Activated CD8-positive, alpha-beta T cell treated with anti-CD3 and anti-CD28 coated beads, Interleukin-2, amount 10 ng/mL, durations not matched to agents 7 days and 5 days (primary cell): ENCODE measurements at regions of chr1 and their contacts with region 1.

Region 1: GRCh38 chr1:92994105-92994712 is 32.9 kb upstream of the DIPK1A start:
- DNase-seq: peak; percentile 89
- ATAC-seq: peak; percentile 83
- H3K4me3 Mint-ChIP-seq: no peak overlapping the region
- H3K27ac Mint-ChIP-seq: peak overlapping the region; percentile 71
- H3K4me1 Mint-ChIP-seq: peaks cover 60% of the 10 kb centered on the region
- H3K27me3 Mint-ChIP-seq: no peaks in the 10 kb centered on the region

Region 2: DNA sequence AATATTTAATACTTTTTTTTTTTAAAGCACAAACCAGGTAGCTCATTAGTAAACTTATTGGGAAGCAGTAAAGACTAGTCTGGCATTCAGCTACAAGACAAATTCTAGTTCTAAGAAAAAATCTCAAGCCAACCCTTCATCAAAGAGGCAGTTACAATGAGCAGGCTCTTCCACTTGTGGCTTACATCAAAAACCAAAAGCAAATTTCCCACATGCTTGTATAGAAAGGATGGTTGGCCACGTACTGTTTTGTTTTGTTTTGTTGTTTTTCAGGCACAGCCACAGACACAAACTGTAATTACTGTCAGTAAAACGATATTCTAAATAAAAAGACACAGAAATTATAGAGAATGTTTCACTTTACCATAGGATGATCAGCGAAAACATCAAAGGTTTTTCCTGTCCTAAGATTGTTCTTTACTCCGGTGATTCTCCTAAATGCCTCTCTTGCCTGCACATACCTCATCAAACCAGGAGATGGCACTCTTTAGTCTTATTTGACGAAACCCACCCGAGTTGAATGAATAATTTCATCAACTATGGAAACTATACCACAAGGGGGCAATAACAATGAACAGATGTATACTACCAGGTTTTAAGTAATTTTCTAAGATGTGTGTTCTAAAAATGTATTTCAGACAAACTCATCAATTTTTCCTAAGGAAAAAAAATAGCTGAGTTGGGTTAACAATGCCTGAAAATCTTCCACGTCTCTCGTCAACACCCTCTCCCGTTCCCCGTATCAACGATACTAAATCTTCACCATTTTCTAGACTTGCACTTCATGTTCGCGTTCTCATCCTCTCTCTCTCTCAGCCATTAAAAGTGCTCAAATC is 135.4 kb before region 1 on chr1:
- CTCF ChIA-PET with region 1: interaction called, 142 read pairs
- POLR2A ChIA-PET with region 1: interaction called, 3 read pairs
- DNase-seq: peak; percentile 78
- ATAC-seq: peak; percentile 85
- H3K4me3 Mint-ChIP-seq: peak overlapping the region; percentile 11
- H3K27ac Mint-ChIP-seq: peak overlapping the region; percentile 62
- H3K4me1 Mint-ChIP-seq: peaks cover 25% of the 10 kb centered on the region
- H3K27me3 Mint-ChIP-seq: no peaks in the 10 kb centered on the region

Region 3: DNA sequence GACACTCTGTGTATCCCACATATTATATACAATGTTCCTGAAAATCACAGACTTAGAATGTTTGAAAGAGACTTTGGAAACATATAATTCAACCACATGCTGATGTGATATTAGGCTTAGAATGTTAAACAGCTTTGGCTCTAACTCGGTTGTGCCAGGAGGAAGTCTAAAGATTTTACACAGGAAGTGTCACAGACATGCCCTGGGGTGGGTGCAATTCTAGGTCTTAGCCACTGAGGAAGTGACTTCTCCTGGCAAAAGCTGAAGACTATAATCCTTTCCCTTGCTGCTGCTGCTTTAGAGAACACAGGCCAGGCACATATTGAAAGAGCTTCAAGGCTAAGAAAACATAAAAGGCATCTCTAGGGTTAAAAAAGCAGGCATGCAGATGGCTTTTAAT is 111.4 kb before region 1 on chr1:
- CTCF ChIA-PET with region 1: interaction called, 17 read pairs
- POLR2A ChIA-PET with region 1: no interaction called
- DNase-seq: peak; percentile 56
- ATAC-seq: peak; percentile 88
- H3K4me3 Mint-ChIP-seq: peak overlapping the region; percentile 3
- H3K27ac Mint-ChIP-seq: peak overlapping the region; percentile 56
- H3K4me1 Mint-ChIP-seq: peaks cover 32% of the 10 kb centered on the region
- H3K27me3 Mint-ChIP-seq: no peaks in the 10 kb centered on the region

Region 4: DNA sequence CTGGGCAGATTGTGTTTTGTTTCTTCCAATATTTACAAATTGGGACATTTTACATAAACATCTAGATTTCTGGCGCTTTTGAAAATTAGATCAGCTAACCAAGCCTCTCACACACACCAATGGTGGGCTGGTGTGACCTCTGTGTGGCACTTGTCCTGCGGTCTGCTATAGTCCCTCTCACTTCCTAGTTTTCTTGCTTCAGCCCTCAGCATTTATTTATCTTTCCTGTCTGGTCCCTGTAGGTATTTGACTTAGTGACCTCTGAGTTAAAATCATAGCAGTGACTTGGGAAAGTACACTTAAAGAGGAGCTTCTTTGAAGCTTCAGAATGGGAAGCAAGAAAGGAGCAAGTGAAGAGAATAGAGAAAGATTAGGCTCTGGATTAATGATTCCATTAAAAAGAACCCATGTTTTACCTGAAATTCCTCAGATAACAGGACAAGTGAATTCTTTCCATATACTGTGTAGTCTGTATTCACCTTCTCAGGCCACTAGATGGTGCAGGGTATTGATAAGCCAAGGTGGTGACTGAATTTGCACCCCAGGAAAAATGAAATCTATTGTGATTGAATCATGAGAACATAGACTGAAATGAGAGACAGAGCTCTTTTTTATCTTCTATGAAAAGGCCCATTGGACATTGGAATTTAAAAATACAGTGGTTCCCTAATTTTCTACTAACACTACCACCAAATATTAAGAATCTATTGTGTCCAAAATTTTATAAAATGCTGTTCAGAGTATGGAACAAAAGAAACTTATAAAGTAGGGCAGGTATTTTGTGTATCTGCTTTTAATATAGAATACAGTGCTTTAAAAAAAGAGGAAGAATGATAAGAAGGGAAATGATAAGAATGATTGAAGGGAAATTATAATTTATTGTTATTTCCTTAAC is 25.8 kb before region 1 on chr1:
- CTCF ChIA-PET with region 1: interaction called, 623 read pairs
- POLR2A ChIA-PET with region 1: interaction called, 64 read pairs
- DNase-seq: peak; percentile 59
- ATAC-seq: peak; percentile 60
- H3K4me3 Mint-ChIP-seq: no peak overlapping the region
- H3K27ac Mint-ChIP-seq: no peak overlapping the region
- H3K4me1 Mint-ChIP-seq: peaks cover 39% of the 10 kb centered on the region
- H3K27me3 Mint-ChIP-seq: no peaks in the 10 kb centered on the region

Region 5: GRCh38 chr1:93007941-93008577 is 13.8 kb after region 1 on chr1:
- CTCF ChIA-PET with region 1: interaction called, 31 read pairs
- POLR2A ChIA-PET with region 1: no interaction called
- DNase-seq: no peak
- ATAC-seq: no peak
- H3K4me3 Mint-ChIP-seq: no peak overlapping the region
- H3K27ac Mint-ChIP-seq: no peak overlapping the region
- H3K4me1 Mint-ChIP-seq: no peaks in the 10 kb centered on the region
- H3K27me3 Mint-ChIP-seq: peaks cover 21% of the 10 kb centered on the region